ENCODE measurements at regions of chr10 and their contacts with region 1.

Region 1: GRCh38 chr10:122565728-122566206 is 5.2 kb downstream of the DMBT1 start:
- DNase-seq: peak; percentile 56
- ATAC-seq: peak; percentile 56
- H3K4me3 ChIP-seq: peak overlapping the region in 1 of 3 experiments; percentile 45; a peak in 1 of 6 replicates
- H3K27ac ChIP-seq: no peak overlapping the region
- H3K4me1 ChIP-seq: no peaks in the 10 kb centered on the region
- H3K27me3 ChIP-seq: peaks cover 0 to 5% of the 10 kb centered on the region in 2 experiments; a peak in 3 of 5 replicates
- CTCF ChIP-seq: peak; percentile 88
- EP300 ChIP-seq: no peak
- POLR2A ChIP-seq: no peak
- RAD21 ChIP-seq: peak; percentile 78; the same call in 1 of the 2 replicates

Region 2: GRCh38 chr10:122279725-122280141 is 286.0 kb before region 1 on chr10:
- CTCF ChIA-PET with region 1: interaction called, 27 read pairs
- POLR2A ChIA-PET with region 1: interaction called, 5 read pairs
- in situ Hi-C with region 1: loop called (anchors 5 kb)
- intact Hi-C with region 1: no loop called
- DNase-seq: peak; percentile 54
- ATAC-seq: peak; percentile 87
- H3K4me3 ChIP-seq: peak overlapping the region in 1 of 3 experiments; percentile 14; a peak in 1 of 6 replicates
- H3K27ac ChIP-seq: no peak overlapping the region
- H3K4me1 ChIP-seq: peaks cover 32% of the 10 kb centered on the region
- H3K27me3 ChIP-seq: peaks cover 5 to 18% of the 10 kb centered on the region in 2 experiments; a peak in 4 of 5 replicates
- CTCF ChIP-seq: peak; percentile 94
- EP300 ChIP-seq: no peak
- POLR2A ChIP-seq: no peak
- RAD21 ChIP-seq: peak; percentile 85

Region 3: GRCh38 chr10:122446668-122447423 is 118.9 kb before region 1 on chr10:
- CTCF ChIA-PET with region 1: no interaction called
- POLR2A ChIA-PET with region 1: no interaction called
- in situ Hi-C with region 1: no loop called
- intact Hi-C with region 1: loop called (anchors 10 kb)
- DNase-seq: no peak
- ATAC-seq: peak; percentile 60
- H3K4me3 ChIP-seq: no peak overlapping the region
- H3K27ac ChIP-seq: no peak overlapping the region
- H3K4me1 ChIP-seq: peaks cover 10% of the 10 kb centered on the region
- H3K27me3 ChIP-seq: peaks cover 0 to 28% of the 10 kb centered on the region in 2 experiments; a peak in 3 of 5 replicates
- CTCF ChIP-seq: no peak
- EP300 ChIP-seq: no peak
- POLR2A ChIP-seq: no peak
- RAD21 ChIP-seq: no peak

Region 4: GRCh38 chr10:122525788-122526187 is 40.0 kb before region 1 on chr10:
- CTCF ChIA-PET with region 1: interaction called, 11 read pairs
- POLR2A ChIA-PET with region 1: no interaction called
- in situ Hi-C with region 1: no loop called
- intact Hi-C with region 1: loop called (anchors 1 kb)
- DNase-seq: peak; percentile 30
- ATAC-seq: peak; percentile 75
- H3K4me3 ChIP-seq: no peak overlapping the region
- H3K27ac ChIP-seq: no peak overlapping the region
- H3K4me1 ChIP-seq: peaks cover 18% of the 10 kb centered on the region
- H3K27me3 ChIP-seq: peaks cover 0 to 26% of the 10 kb centered on the region in 2 experiments; a peak in 1 of 5 replicates
- CTCF ChIP-seq: peak; percentile 52
- EP300 ChIP-seq: no peak
- POLR2A ChIP-seq: no peak
- RAD21 ChIP-seq: peak; percentile 41; the same call in 1 of the 2 replicates

Measured in HepG2 (cell line).